Activated CD4-positive, alpha-beta memory T cell treated with anti-CD3 and anti-CD28 coated beads, Interleukin-2, amount 10 ng/mL, durations not matched to agents 7 days and 5 days (primary cell): ENCODE measurements at regions of chrX and their contacts with region 1.

Region 1: GRCh38 chrX:15789979-15790768 is at the start of gene ZRSR2:
- DNase-seq: peak; percentile 89
- H3K4me3 Mint-ChIP-seq: no peak within 1 kb of the TSS
- H3K27ac Mint-ChIP-seq: no peak within 1 kb of the TSS
- H3K4me1 Mint-ChIP-seq: peaks cover 31% of the 10 kb centered on the region
- H3K27me3 Mint-ChIP-seq: no peaks in the 10 kb centered on the region
- total RNA-seq, gene ZRSR2: 21.9 to 24.2 TPM

Region 2: DNA sequence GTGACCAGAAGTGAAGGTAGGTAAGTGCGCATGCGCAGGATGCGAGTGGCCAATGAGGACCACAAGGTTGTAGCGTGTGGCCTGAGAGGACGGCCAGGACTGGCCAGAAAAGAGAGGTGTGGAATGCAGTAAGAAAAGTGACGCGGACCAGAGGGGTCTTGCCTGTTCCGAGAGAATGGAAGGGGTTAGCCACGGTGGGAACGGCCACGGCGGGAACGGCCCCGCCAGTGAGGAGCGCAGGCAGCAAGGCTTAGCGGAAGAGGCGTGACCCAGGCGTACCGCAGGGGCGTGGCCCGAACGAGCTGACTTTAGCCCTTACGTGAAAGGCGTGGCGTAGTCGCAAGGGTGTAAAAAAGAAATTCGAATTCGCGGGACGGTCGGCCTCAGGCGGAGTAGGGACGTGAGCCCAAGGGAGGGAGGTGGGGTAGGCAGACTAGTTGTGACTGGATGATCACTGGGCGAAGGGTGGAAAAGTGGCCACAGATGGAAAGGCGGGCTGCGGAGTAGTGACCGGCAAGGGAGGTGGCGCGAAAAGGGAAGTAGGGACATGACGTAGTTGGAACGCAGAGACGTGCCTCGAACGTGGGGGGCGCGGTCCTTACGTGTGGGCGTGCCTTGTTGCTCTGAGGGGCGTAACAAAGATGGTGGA is 115.2 kb before region 1 on chrX:
- CTCF ChIA-PET with region 1: no interaction called
- POLR2A ChIA-PET with region 1: interaction called, 23 read pairs
- DNase-seq: peak; percentile 85
- H3K4me3 Mint-ChIP-seq: no peak overlapping the region
- H3K27ac Mint-ChIP-seq: no peak overlapping the region
- H3K4me1 Mint-ChIP-seq: peaks cover 33% of the 10 kb centered on the region
- H3K27me3 Mint-ChIP-seq: peaks cover 3% of the 10 kb centered on the region

Region 3: GRCh38 chrX:15737960-15738902 is 51.9 kb before region 1 on chrX and contains the start of gene CA5B:
- CTCF ChIA-PET with region 1: interaction called, 10 read pairs
- POLR2A ChIA-PET with region 1: interaction called, 42 read pairs
- DNase-seq: peak; percentile 97
- H3K4me3 Mint-ChIP-seq: peak within 1 kb of the TSS; percentile 87
- H3K27ac Mint-ChIP-seq: peak within 1 kb of the TSS; percentile 74
- H3K4me1 Mint-ChIP-seq: peaks cover 33% of the 10 kb centered on the region
- H3K27me3 Mint-ChIP-seq: no peaks in the 10 kb centered on the region
- total RNA-seq, gene CA5B: 26.1 to 31.7 TPM

Region 4: GRCh38 chrX:15749642-15750610 is 40.2 kb before region 1 on chrX:
- CTCF ChIA-PET with region 1: no interaction called
- POLR2A ChIA-PET with region 1: interaction called, 20 read pairs
- DNase-seq: peak; percentile 39
- H3K4me3 Mint-ChIP-seq: peak overlapping the region; percentile 66
- H3K27ac Mint-ChIP-seq: peak overlapping the region; percentile 99
- H3K4me1 Mint-ChIP-seq: peaks cover 68% of the 10 kb centered on the region
- H3K27me3 Mint-ChIP-seq: no peaks in the 10 kb centered on the region

Region 5: DNA sequence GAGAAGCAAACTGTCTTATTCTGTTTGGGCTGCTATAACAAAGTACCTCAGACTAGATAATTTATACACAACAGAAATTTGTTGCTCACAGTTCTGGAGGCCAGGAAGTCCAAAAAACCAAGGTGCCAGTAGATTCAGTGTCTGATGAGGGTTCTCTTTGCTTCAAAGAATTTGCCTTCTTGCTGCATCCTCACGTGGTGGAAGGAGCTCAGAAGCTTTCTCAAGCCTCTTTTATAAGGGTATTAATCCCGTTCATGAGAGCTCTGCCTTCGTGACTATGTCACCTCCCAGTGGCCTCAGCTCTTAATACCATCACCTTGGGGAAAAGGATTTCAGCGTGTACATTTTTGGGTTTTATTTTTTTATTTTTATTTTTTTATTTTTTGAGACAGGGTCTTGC is 32.0 kb before region 1 on chrX:
- CTCF ChIA-PET with region 1: interaction called, 3 read pairs
- POLR2A ChIA-PET with region 1: interaction called, 15 read pairs
- DNase-seq: no peak
- H3K4me3 Mint-ChIP-seq: no peak overlapping the region
- H3K27ac Mint-ChIP-seq: peak overlapping the region; percentile 65
- H3K4me1 Mint-ChIP-seq: peaks cover 53% of the 10 kb centered on the region
- H3K27me3 Mint-ChIP-seq: no peaks in the 10 kb centered on the region

Region 6: GRCh38 chrX:15815779-15816437 is 25.7 kb after region 1 on chrX:
- CTCF ChIA-PET with region 1: no interaction called
- POLR2A ChIA-PET with region 1: interaction called, 16 read pairs
- DNase-seq: peak; percentile 40
- H3K4me3 Mint-ChIP-seq: no peak overlapping the region
- H3K27ac Mint-ChIP-seq: peak overlapping the region; percentile 79
- H3K4me1 Mint-ChIP-seq: peaks cover 54% of the 10 kb centered on the region
- H3K27me3 Mint-ChIP-seq: no peaks in the 10 kb centered on the region

Region 7: GRCh38 chrX:15854712-15855567 is 64.8 kb after region 1 on chrX and contains the start of gene AP1S2:
- CTCF ChIA-PET with region 1: interaction called, 4 read pairs
- POLR2A ChIA-PET with region 1: interaction called, 33 read pairs
- DNase-seq: peak; percentile 92
- H3K4me3 Mint-ChIP-seq: peak within 1 kb of the TSS; percentile 87
- H3K27ac Mint-ChIP-seq: peak within 1 kb of the TSS; percentile 85
- H3K4me1 Mint-ChIP-seq: peaks cover 22% of the 10 kb centered on the region
- H3K27me3 Mint-ChIP-seq: no peaks in the 10 kb centered on the region
- total RNA-seq, gene AP1S2: 29.5 to 34.3 TPM

Region 8: GRCh38 chrX:15866147-15866546 is 76.0 kb after region 1 on chrX:
- CTCF ChIA-PET with region 1: no interaction called
- POLR2A ChIA-PET with region 1: no interaction called
- DNase-seq: no peak
- H3K4me3 Mint-ChIP-seq: no peak overlapping the region
- H3K27ac Mint-ChIP-seq: no peak overlapping the region
- H3K4me1 Mint-ChIP-seq: no peaks in the 10 kb centered on the region
- H3K27me3 Mint-ChIP-seq: peaks cover 8% of the 10 kb centered on the region